Activated CD8-positive, alpha-beta memory T cell treated with anti-CD3 and anti-CD28 coated beads, Interleukin-2, amount 10 ng/mL, durations not matched to agents 7 days and 5 days (primary cell): ENCODE measurements at regions of chr5 and their contacts with region 1.

Region 1: GRCh38 chr5:176447982-176448608 is at the start of gene FAF2:
- DNase-seq: peak; percentile 97
- ATAC-seq: peak; percentile 95
- H3K4me3 Mint-ChIP-seq: peak within 1 kb of the TSS; percentile 98
- H3K27ac Mint-ChIP-seq: peak within 1 kb of the TSS; percentile 99
- H3K4me1 Mint-ChIP-seq: peaks cover 32% of the 10 kb centered on the region
- H3K27me3 Mint-ChIP-seq: peaks cover 2% of the 10 kb centered on the region
- total RNA-seq, gene FAF2: 29.9 to 38.7 TPM

Region 2: DNA sequence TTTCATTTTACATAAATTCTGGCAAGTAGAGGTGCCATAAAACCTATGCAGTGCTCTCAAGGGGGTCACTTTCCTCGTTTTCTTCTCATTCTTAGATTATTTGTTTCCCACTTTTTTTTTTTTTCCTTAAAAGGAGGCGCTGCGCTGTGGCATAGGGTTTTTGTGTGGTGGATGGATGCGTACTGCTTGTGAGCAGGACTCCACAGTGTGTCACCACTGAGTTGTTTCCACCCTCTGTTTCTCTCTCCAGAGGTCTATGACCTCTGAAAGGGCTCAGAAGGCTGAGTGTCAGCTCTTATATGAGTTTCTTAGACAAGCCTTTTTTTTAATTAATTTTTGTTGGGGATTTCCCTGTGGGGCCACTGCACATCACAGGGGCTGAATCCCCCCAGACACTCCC is 18.1 kb before region 1 on chr5:
- CTCF ChIA-PET with region 1: interaction called, 15 read pairs
- DNase-seq: no peak
- ATAC-seq: peak; percentile 30
- H3K4me3 Mint-ChIP-seq: no peak overlapping the region
- H3K27ac Mint-ChIP-seq: peak overlapping the region; percentile 54
- H3K4me1 Mint-ChIP-seq: peaks cover 6% of the 10 kb centered on the region
- H3K27me3 Mint-ChIP-seq: peaks cover 2% of the 10 kb centered on the region

Region 3: DNA sequence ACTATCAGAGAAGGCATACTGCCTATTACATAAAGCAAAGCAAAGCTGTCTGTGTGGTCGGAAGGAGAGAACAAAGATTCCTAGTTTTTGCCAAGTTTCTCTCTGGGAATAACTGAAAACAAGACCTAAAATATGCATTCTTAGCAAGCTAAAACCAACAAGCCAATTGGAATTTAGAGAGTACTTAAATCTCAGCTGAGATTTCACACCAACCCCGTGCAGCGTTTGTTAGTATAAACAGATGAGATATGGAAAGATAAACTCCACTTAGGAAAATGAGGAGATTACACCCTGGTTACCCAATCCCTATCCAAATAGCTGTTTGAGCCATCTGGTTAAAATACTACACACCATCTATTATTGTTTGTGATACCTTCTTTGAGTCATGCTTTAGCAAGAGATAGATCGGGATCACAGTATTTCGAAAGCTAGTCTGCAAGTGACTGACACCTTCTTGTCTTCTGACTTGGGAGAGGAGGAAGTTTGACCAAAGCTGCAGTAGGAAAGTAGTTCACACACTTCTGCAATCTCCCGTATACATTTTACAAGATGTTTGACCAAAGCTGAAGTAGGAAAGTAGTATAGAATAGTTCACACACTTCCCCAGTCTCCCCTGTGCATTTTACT is 18.3 kb after region 1 on chr5:
- CTCF ChIA-PET with region 1: interaction called, 14 read pairs
- DNase-seq: no peak
- ATAC-seq: no peak
- H3K4me3 Mint-ChIP-seq: no peak overlapping the region
- H3K27ac Mint-ChIP-seq: no peak overlapping the region
- H3K4me1 Mint-ChIP-seq: no peaks in the 10 kb centered on the region
- H3K27me3 Mint-ChIP-seq: no peaks in the 10 kb centered on the region

Region 4: DNA sequence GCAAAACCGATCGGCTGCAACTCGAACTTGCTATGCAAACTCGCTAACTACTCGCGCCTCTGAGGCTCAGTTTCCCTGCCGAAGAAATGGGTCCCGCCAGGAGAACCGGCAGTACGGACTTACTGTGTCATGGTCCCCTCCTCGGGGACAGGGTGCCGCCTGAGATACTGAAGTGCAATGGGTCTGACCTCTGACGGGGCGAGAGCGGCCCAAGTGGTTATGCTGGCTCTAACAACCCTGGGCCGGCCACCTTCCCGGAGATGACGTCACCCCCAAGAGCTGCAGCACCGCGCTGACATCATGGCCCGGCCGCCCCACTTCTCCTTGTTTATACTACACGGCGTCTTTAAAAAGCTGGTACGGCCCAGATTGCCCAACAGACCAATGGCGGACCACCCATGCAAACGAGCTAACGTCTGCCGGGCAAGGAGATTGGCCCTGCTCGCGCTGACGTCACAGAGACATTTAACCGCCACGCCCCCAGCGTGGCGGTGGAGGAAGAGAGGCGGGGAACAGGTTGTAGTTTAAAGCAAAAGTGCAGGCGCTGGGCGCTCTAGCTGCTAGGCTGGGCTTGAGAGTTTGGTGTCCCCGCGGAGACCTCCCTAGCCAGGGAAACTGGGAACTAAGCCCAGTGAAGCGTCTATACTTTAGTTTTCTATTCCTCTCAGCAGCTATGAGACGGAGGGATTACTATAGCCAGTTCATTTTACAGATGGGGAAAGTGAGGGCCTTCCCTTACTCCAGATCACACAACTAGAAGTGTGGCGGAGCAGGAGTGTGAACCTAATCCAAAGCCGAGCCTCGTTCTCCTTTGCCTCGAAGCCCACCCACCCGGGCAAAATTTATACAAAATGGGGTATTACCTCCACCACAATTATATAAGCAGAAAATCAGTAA is 89.8 kb after region 1 on chr5:
- CTCF ChIA-PET with region 1: interaction called, 20 read pairs
- DNase-seq: peak; percentile 100
- ATAC-seq: peak; percentile 76
- H3K4me3 Mint-ChIP-seq: peak overlapping the region; percentile 93
- H3K27ac Mint-ChIP-seq: peak overlapping the region; percentile 90
- H3K4me1 Mint-ChIP-seq: peaks cover 68% of the 10 kb centered on the region
- H3K27me3 Mint-ChIP-seq: no peaks in the 10 kb centered on the region

Region 5: DNA sequence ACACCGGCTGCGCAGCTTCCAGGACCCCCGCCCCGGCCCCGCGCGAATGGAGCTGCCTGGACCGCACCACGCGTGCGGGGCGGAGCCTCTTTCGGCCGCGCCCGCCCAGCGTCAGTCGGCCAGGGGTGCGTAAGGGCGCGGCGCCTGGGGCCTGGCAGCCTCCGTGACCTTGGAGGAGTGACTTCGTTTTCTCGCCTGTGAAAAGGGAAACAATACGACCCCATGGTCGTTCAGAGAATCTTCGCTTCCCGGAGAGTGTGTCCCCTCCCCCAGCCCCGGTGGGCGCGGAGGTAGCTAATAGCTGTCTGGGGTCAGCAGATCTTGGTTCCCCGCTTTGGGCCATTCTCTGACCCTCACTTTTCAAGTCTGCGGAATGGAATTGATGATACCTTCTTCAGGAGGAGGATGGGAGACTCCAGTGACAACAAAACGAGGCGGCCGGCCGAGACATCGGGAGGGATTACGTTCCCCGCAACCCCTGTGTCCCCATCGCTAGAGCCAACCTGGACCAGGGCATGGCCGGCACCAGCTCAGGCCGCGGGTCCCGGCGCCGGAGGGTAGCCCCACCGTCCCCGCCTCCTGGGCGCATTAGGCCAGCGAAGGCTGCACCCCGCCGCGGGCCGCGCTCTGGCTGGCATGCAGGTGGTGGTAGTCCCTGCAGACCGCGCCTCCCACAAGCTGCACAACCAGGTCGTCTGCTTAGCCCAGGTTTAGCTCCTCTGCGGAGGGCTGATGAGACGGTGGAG is 95.5 kb after region 1 on chr5:
- CTCF ChIA-PET with region 1: interaction called, 20 read pairs
- DNase-seq: peak; percentile 85
- ATAC-seq: peak; percentile 80
- H3K4me3 Mint-ChIP-seq: peak overlapping the region; percentile 92
- H3K27ac Mint-ChIP-seq: peak overlapping the region; percentile 94
- H3K4me1 Mint-ChIP-seq: peaks cover 54% of the 10 kb centered on the region
- H3K27me3 Mint-ChIP-seq: no peaks in the 10 kb centered on the region